ENCODE measurements at regions of chr9 and their contacts with region 1.

Region 1: DNA sequence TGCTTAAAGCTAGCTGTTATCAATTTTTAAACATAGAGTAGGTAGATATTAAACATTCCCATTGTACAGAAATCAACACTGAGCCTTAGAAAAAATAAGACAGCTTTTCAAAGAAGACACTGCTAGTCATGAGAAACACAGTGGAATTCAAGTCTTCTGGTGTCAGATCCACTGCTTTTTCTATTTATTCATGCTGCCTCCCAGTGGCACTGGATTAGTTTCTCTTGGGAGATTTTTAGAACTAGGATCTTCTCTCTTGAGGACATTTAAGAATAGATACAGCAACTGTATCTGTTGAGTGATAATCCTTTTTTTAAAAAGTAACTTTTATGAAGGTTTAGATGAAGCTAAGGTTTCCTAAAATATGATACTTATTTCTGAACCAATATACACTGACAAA is 1635.4 kb upstream of the C9orf72 start:
- DNase-seq: no peak
- H3K4me3 ChIP-seq: no peak overlapping the region
- H3K27ac ChIP-seq: no peak overlapping the region
- H3K4me1 ChIP-seq: peaks cover 0 to 6% of the 10 kb centered on the region in 2 donors
- H3K27me3 ChIP-seq: peaks cover 4 to 18% of the 10 kb centered on the region in 2 donors
- CTCF ChIP-seq: no peak
- POLR2A ChIP-seq: no peak

Region 2: GRCh38 chr9:28289746-28290145 is 918.9 kb before region 1 on chr9:
- intact Hi-C with region 1: loop called (anchors 5 kb)
- DNase-seq: peak in 1 of 2 donors; percentile 57
- H3K4me3 ChIP-seq: no peak overlapping the region
- H3K27ac ChIP-seq: no peak overlapping the region
- H3K4me1 ChIP-seq: no peaks in the 10 kb centered on the region
- H3K27me3 ChIP-seq: no peaks in the 10 kb centered on the region
- CTCF ChIP-seq: no peak
- POLR2A ChIP-seq: no peak

Measured in breast epithelium (tissue), 4 donors.